ENCODE measurements at regions of chr4 and their contacts with region 1.

Region 1: GRCh38 chr4:128782076-128782715 is 27.3 kb upstream of the JADE1 start:
- DNase-seq: peak; percentile 37 to 78 (median 65)
- ATAC-seq: peak; percentile 82
- H3K4me3 ChIP-seq: no peak overlapping the region
- H3K4me3 Mint-ChIP-seq: no peak overlapping the region
- H3K27ac ChIP-seq: no peak overlapping the region
- H3K27ac Mint-ChIP-seq: no peak overlapping the region
- H3K4me1 ChIP-seq: no peaks in the 10 kb centered on the region
- H3K4me1 Mint-ChIP-seq: no peaks in the 10 kb centered on the region
- H3K27me3 ChIP-seq: no peaks in the 10 kb centered on the region
- H3K27me3 Mint-ChIP-seq: peaks cover 8% of the 10 kb centered on the region
- CTCF ChIP-seq: peak; percentile 61

Region 2: DNA sequence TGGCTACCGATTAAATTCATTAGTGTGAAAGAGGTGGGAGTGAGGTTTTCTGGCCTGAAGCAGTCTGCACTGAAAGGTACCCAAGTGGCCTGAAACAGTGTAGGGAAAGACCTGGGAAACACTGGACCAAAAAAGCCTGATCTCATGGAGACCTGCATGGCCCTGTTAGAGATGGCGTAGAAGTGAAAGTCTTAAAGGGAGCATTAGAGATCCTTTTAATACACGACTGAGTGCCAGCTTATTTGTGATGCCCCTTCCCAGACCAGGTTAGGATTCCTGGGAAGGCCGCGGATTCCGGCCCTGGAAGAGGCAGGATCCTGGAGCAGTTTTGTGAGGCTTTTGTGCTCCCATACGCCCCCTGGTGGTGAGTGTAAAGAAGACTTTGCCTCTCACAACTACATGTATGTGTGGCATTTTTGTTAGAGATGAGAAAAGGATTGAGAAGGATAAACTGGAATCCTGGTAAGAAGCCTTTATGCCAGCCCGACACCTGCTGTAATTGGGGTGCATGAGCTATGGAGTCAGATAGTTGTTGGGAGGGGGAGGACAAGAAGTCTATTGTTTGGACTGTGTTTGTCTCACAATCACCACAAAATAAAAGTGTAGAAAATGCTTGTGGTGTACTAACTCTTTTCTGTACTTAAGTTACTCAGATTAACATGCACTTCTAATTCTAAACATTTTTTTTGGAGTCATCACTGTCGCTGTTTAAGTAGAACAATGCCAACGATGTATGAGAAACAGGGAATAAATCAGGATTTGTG is 81.3 kb after region 1 on chr4:
- CTCF ChIA-PET with region 1: interaction called, 31 read pairs
- POLR2A ChIA-PET with region 1: no interaction called
- intact Hi-C with region 1: loop called in 1 of 2 experiments (anchors 1 kb)
- DNase-seq: peak; percentile 24 to 80 (median 67)
- ATAC-seq: peak; percentile 26
- H3K4me3 ChIP-seq: no peak overlapping the region
- H3K4me3 Mint-ChIP-seq: no peak overlapping the region
- H3K27ac ChIP-seq: peak overlapping the region in 1 of 2 experiments; percentile 52
- H3K27ac Mint-ChIP-seq: peak overlapping the region; percentile 75
- H3K4me1 ChIP-seq: peaks cover 24% of the 10 kb centered on the region
- H3K4me1 Mint-ChIP-seq: peaks cover 35% of the 10 kb centered on the region
- H3K27me3 ChIP-seq: no peaks in the 10 kb centered on the region
- H3K27me3 Mint-ChIP-seq: no peaks in the 10 kb centered on the region
- CTCF ChIP-seq: peak; percentile 78

Region 3: GRCh38 chr4:128924951-128925350 is 142.8 kb after region 1 on chr4:
- CTCF ChIA-PET with region 1: no interaction called
- POLR2A ChIA-PET with region 1: no interaction called
- intact Hi-C with region 1: loop called in 1 of 2 experiments (anchors 10 kb)
- DNase-seq: no peak
- ATAC-seq: no peak
- H3K4me3 ChIP-seq: no peak overlapping the region
- H3K4me3 Mint-ChIP-seq: no peak overlapping the region
- H3K27ac ChIP-seq: no peak overlapping the region
- H3K27ac Mint-ChIP-seq: no peak overlapping the region
- H3K4me1 ChIP-seq: no peaks in the 10 kb centered on the region
- H3K4me1 Mint-ChIP-seq: peaks cover 2% of the 10 kb centered on the region
- H3K27me3 ChIP-seq: no peaks in the 10 kb centered on the region
- H3K27me3 Mint-ChIP-seq: no peaks in the 10 kb centered on the region
- CTCF ChIP-seq: no peak

Region 4: DNA sequence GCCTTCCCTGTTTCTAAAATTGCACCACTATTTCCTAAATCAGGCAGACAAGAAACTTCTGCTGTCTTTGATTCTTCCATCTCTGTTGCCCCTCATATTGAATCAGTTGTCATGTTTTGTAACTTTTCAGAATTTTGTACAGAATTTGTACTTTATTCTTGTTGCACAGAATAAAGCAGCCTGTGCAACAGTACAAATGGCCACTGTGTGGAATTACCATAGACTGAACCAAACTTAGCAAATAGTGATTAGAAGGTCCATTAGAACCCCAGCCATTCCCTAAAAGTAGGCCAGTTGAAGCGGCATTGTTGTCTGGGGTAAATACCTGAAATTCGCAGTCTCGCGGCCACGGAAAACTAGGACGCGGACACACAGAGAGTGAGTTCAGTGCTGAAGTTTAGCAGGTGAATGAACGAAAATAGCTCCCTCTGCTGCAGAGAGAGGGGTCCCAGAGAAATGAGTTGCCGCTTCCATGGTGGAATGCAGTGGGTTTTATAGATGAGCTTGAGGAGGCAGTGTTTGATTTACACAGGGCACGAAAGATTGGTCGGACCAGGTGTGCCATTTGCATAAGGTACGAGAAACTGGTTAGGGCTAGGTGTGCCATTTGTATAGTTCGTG is 385.6 kb after region 1 on chr4:
- CTCF ChIA-PET with region 1: no interaction called
- POLR2A ChIA-PET with region 1: no interaction called
- intact Hi-C with region 1: loop called in 1 of 2 experiments (anchors 5 kb)
- DNase-seq: peak in 2 of 9 experiments; percentile 3
- ATAC-seq: no peak
- H3K4me3 ChIP-seq: no peak overlapping the region
- H3K4me3 Mint-ChIP-seq: no peak overlapping the region
- H3K27ac ChIP-seq: no peak overlapping the region
- H3K27ac Mint-ChIP-seq: no peak overlapping the region
- H3K4me1 ChIP-seq: no peaks in the 10 kb centered on the region
- H3K4me1 Mint-ChIP-seq: no peaks in the 10 kb centered on the region
- H3K27me3 ChIP-seq: no peaks in the 10 kb centered on the region
- H3K27me3 Mint-ChIP-seq: peaks cover 31% of the 10 kb centered on the region
- CTCF ChIP-seq: no peak

Region 5: GRCh38 chr4:129362674-129363274 is 580.6 kb after region 1 on chr4:
- CTCF ChIA-PET with region 1: no interaction called
- POLR2A ChIA-PET with region 1: no interaction called
- intact Hi-C with region 1: loop called in 1 of 2 experiments (anchors 10 kb)
- DNase-seq: peak in 7 of 9 experiments; percentile 4 to 67 (median 30)
- ATAC-seq: no peak
- H3K4me3 ChIP-seq: no peak overlapping the region
- H3K4me3 Mint-ChIP-seq: no peak overlapping the region
- H3K27ac ChIP-seq: no peak overlapping the region
- H3K27ac Mint-ChIP-seq: no peak overlapping the region
- H3K4me1 ChIP-seq: no peaks in the 10 kb centered on the region
- H3K4me1 Mint-ChIP-seq: no peaks in the 10 kb centered on the region
- H3K27me3 ChIP-seq: no peaks in the 10 kb centered on the region
- H3K27me3 Mint-ChIP-seq: peaks cover 14% of the 10 kb centered on the region
- CTCF ChIP-seq: peak; percentile 63

Region 6: DNA sequence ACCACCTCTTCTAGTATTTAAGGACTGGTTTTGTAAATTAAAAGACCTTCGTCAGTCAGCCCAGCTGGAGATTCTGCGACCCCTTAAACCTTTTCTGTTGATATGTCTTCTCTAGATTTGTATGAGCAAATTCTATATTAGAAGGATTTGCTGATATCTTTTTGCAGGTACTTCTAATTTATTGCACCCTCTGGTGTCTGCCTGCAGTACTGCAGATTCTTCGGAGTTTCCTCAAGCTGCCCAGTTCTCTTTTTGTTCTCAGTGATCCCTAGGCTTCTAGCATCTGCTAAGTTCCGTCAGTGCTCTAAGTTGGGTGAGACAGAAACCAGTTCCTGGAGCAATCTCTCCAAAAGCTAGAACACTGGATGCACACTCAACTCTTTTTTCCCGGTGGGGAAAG is 859.0 kb after region 1 on chr4:
- CTCF ChIA-PET with region 1: no interaction called
- POLR2A ChIA-PET with region 1: no interaction called
- intact Hi-C with region 1: loop called in 1 of 2 experiments (anchors 5 kb)
- DNase-seq: peak in 7 of 9 experiments; percentile 7 to 40 (median 31)
- ATAC-seq: no peak
- H3K4me3 ChIP-seq: no peak overlapping the region
- H3K4me3 Mint-ChIP-seq: no peak overlapping the region
- H3K27ac ChIP-seq: no peak overlapping the region
- H3K27ac Mint-ChIP-seq: no peak overlapping the region
- H3K4me1 ChIP-seq: no peaks in the 10 kb centered on the region
- H3K4me1 Mint-ChIP-seq: no peaks in the 10 kb centered on the region
- H3K27me3 ChIP-seq: no peaks in the 10 kb centered on the region
- H3K27me3 Mint-ChIP-seq: no peaks in the 10 kb centered on the region
- CTCF ChIP-seq: peak; percentile 57